AG04450 (cell line): ENCODE measurements at regions of chr14 and their contacts with region 1.

Region 1: GRCh38 chr14:93115069-93115820 is 480 bp downstream of the ITPK1 start:
- DNase-seq: no peak
- H3K4me3 ChIP-seq: peak overlapping the region; percentile 74
- H3K27ac ChIP-seq: no peak overlapping the region
- H3K27me3 ChIP-seq: no peaks in the 10 kb centered on the region
- CTCF ChIP-seq: no peak

Region 2: DNA sequence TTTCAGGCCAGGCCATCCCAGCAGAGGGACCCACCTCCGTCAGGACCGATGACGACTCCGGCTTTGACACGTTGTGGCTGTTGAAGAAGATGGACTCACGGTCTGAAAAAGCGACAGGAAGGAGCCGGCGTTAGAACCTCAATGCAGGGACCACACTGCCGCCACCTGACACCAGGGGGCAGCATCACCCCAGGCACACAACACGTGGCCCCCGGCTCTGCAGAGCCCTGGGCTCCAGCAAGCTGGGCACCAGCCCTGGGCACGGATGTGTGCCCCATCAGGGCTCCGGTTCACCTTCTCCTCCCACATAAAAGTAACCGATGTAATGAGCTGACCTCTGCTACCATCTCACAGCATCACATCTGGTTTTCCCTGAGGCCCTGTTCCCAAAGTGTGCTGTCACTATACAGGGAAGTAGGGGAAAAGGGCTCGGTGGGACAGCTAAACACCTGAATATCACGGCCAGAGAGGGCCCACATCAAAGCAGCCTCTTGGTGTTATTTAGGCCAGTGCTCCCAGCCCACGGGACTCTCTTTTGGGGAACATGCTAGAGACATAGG is 163.3 kb before region 1 on chr14:
- CTCF ChIA-PET with region 1: interaction called, 58 read pairs
- POLR2A ChIA-PET with region 1: no interaction called
- DNase-seq: peak; percentile 18
- H3K4me3 ChIP-seq: no peak overlapping the region
- H3K27ac ChIP-seq: no peak overlapping the region
- H3K27me3 ChIP-seq: no peaks in the 10 kb centered on the region
- CTCF ChIP-seq: peak; percentile 92

Region 3: GRCh38 chr14:93103392-93104080 is 11.7 kb before region 1 on chr14:
- CTCF ChIA-PET with region 1: interaction called, 68 read pairs
- POLR2A ChIA-PET with region 1: interaction called, 4 read pairs
- DNase-seq: no peak
- H3K4me3 ChIP-seq: no peak overlapping the region
- H3K27ac ChIP-seq: no peak overlapping the region
- H3K27me3 ChIP-seq: no peaks in the 10 kb centered on the region
- CTCF ChIP-seq: no peak

Region 4: GRCh38 chr14:93146119-93146518 is 30.9 kb after region 1 on chr14:
- CTCF ChIA-PET with region 1: interaction called, 37 read pairs
- POLR2A ChIA-PET with region 1: no interaction called
- DNase-seq: no peak
- H3K4me3 ChIP-seq: no peak overlapping the region
- H3K27ac ChIP-seq: no peak overlapping the region
- H3K27me3 ChIP-seq: no peaks in the 10 kb centered on the region
- CTCF ChIP-seq: no peak

Region 5: DNA sequence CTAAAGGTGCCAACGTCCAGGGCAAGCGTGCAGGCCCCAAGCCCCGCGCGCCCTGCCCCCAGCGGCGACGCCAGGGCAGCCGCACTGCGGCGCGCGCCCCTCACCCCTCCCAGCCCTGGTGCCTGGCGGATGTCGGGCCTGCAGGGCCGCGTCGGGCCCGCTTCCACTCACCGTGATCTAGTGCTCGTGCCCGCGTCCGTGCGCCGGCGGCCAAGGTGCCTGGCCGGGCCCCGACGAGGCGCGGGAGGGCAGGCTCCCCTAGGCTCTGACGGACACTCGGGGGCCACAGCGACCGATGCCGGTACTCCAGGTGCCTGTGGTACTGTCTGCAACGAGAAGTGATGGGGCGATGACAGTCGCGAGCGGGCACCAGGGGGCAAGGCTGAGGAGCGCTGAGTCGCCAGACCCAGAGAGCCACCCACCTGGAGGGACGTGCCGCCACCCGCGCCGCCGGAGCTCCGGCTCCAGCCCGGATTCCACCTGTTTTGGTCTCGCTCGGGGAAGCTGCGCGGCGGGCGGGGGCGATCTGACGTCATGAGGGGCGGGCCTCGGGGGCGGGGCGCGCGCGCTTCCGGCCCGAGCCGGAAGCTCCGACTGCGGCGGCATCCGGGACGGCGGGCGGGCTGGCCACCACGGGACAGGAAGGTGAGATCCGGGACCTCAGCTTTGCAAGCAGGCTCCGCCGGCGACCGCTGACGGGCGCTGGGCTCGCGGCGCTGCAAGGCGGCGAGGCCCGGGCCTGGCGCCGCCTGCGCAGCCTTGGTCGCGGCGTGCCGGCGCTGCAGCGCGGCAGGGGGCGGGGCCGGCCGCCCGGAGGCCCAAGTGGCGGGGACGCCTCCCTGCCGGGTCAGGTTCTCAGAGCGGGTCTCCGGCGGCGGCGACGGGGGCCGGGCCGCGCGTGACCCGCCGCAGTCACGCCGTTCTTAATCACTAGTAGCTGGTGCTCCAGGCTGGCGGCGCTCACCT is 69.4 kb after region 1 on chr14 and contains the starts of genes LYSET and MOAP1:
- CTCF ChIA-PET with region 1: interaction called, 72 read pairs
- POLR2A ChIA-PET with region 1: interaction called, 5 read pairs
- DNase-seq: peak; percentile 36
- H3K4me3 ChIP-seq: peak within 1 kb of the TSS; percentile 98
- H3K27ac ChIP-seq: peak within 1 kb of the TSS; percentile 69
- H3K27me3 ChIP-seq: no peaks in the 10 kb centered on the region
- CTCF ChIP-seq: no peak
- polyA plus RNA-seq, gene LYSET: 12.2 and 15.6 TPM in 2 replicates
- polyA plus RNA-seq, gene MOAP1: 16.7 and 21.0 TPM in 2 replicates

Region 6: GRCh38 chr14:93543766-93544165 is 428.5 kb after region 1 on chr14:
- CTCF ChIA-PET with region 1: interaction called, 11 read pairs
- POLR2A ChIA-PET with region 1: no interaction called
- DNase-seq: no peak
- H3K4me3 ChIP-seq: no peak overlapping the region
- H3K27ac ChIP-seq: no peak overlapping the region
- H3K27me3 ChIP-seq: no peaks in the 10 kb centered on the region
- CTCF ChIP-seq: peak; percentile 48